ENCODE measurements at regions of chr16 and their contacts with region 1.

Region 1: GRCh38 chr16:3305109-3306068 is at the starts of genes TIGD7 and ZNF75A:
- DNase-seq: peak; percentile 86 to 89
- ATAC-seq: peak; percentile 98 to 100 (median 99)
- H3K4me3 ChIP-seq: peak within 1 kb of the TSS; percentile 49 to 89 (median 69)
- H3K27ac ChIP-seq: peak within 1 kb of the TSS; percentile 82 to 98 (median 93)
- H3K4me1 ChIP-seq: peaks cover 0 to 27% (median 17%) of the 10 kb centered on the region in 9 donors
- H3K27me3 ChIP-seq: no peaks in the 10 kb centered on the region
- CTCF ChIP-seq: peak in 4 of 9 donors; percentile 15 to 46 (median 34)
- total RNA-seq, gene TIGD7: 6.5 to 11.2 (median 8.7) TPM
- total RNA-seq, gene ZNF75A: 15.2 to 25.5 (median 21.6) TPM

Region 2: DNA sequence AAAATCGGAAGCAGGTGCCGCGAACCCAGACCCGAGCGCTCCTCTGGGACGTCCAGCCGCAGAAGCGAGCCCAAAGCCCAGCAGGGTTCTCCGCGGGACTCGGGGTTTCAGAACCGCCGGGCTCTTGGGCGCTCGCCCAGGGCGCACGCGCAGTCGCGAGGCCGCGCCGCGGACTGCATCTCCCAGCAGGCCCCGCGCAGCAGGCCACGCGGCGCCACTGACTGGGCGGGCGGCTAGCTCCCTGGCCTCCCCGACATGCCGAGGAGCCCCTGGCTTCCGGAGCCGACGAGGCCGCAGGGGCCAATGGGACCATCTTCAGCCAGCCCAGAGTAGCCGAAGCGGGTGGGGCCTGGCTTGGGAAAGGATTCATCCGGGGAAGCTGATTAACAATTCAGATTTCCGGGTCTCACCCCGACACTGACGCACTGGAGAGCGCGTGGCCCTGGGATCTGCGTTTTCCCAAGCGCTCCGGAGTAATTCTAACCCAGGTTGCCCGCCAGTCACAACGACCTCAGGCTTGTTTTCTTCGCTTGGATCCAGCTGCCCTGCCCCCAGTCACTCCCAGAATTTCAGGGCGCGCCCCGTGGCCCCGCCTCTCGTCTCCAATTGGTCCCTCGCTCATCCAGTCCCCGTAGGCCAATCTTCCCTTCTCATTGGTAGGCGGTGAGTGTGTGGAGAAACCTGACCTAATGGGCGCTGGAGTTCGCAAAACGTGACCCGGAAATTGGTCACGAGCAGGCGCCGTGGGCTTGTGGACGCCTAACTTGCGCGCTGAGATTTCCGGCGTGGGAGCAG is 22.5 kb before region 1 on chr16 and contains the start of gene ZNF263:
- intact Hi-C with region 1: loop called in 2 of 10 experiments (anchors 1 to 2 kb)
- DNase-seq: peak; percentile 94 to 97
- ATAC-seq: peak; percentile 94 to 98 (median 96)
- H3K4me3 ChIP-seq: peak within 1 kb of the TSS; percentile 75 to 100 (median 95)
- H3K27ac ChIP-seq: peak within 1 kb of the TSS; percentile 98 to 99 (median 99)
- H3K4me1 ChIP-seq: peaks cover 9 to 32% (median 26%) of the 10 kb centered on the region in 9 donors
- H3K27me3 ChIP-seq: no peaks in the 10 kb centered on the region
- CTCF ChIP-seq: no peak
- total RNA-seq, gene ZNF263: 7.2 to 13.2 (median 9.2) TPM

Region 3: DNA sequence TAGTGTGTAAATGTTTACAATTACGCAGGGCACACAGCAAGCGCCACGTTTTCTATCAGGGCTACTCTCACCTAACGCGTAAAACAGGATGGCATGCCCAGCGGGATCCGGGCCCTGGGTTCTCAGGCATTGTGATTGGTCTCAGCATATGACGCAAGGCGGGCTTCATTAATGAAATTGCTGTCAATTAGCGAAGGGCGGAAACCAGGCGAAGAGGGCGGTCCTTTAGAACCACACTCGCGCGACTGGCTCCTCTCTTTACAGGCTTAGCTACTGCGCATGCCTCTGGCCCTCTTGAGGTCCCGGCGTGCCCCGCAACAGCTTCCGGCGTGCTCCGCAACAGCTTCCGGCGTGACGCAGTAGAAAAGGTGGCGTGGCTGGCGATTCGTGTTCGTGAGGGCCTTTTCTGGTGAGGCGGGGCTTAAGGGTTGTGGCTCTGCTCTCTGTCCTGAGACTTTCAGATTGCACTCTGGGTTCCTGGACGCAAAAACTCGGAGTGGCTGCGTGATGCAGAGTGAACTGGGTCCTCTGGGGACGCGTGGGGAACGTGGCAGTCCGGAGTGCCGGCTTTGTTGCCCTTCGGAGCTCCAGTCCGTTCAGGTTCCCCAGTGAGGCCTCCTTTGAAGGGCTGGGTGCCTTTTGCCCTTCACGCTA is 59.5 kb after region 1 on chr16:
- intact Hi-C with region 1: loop called in 2 of 10 experiments (anchors 2 to 10 kb)
- DNase-seq: peak; percentile 88
- ATAC-seq: peak; percentile 99 to 100 (median 100)
- H3K4me3 ChIP-seq: peak overlapping the region; percentile 46 to 67 (median 60)
- H3K27ac ChIP-seq: peak overlapping the region; percentile 67 to 92 (median 89)
- H3K4me1 ChIP-seq: peaks cover 0 to 8% (median 0%) of the 10 kb centered on the region in 9 donors
- H3K27me3 ChIP-seq: peaks cover 0 to 17% (median 3%) of the 10 kb centered on the region in 7 donors
- CTCF ChIP-seq: no peak

Region 4: DNA sequence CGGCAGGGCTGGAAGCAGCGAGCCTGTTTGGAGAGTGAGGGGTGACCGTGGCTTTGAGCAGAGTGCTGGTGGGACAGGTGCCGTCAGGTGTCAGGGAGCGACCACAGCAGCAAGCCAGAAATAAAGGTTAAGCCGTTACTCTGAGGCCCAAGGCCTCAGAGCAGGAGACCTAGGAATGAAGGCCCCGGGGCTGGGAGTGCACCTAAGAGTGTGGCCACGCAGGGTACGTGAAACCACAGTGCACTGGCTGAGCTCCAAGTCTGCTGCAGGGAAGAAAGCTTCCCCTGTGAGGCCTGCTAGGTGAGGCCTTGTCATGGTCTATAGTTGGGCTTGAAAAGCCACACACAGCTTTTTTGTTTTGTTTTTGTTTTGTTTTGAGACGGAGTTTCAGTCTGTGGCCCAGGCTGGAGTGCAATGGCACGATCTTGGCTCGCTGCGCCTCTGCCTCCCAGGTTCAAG is 204.1 kb after region 1 on chr16:
- intact Hi-C with region 1: loop called in 2 of 10 experiments (anchors 10 kb)
- DNase-seq: no peak
- ATAC-seq: peak in 1 of 8 donors; percentile 27
- H3K4me3 ChIP-seq: no peak overlapping the region
- H3K27ac ChIP-seq: peak overlapping the region in 1 of 10 donors; percentile 45
- H3K4me1 ChIP-seq: peaks cover 0 to 1% (median 0%) of the 10 kb centered on the region in 9 donors
- H3K27me3 ChIP-seq: no peaks in the 10 kb centered on the region
- CTCF ChIP-seq: no peak